ENCODE measurements at regions of chr20 and their contacts with region 1.

Region 1: GRCh38 chr20:17431621-17432364 is 99.4 kb downstream of the BFSP1 start:
- DNase-seq: peak; percentile 64
- ATAC-seq: no peak

Region 2: GRCh38 chr20:16801919-16802911 is 629.6 kb before region 1 on chr20:
- intact Hi-C with region 1: loop called (anchors 5 kb)
- DNase-seq: peak; percentile 71
- ATAC-seq: no peak

Measured in left ventricle myocardium superior (tissue), 1 donor.